ENCODE measurements at regions of chr6 and their contacts with region 1.

Region 1: GRCh38 chr6:41735427-41736356 is at the start of gene TFEB:
- DNase-seq: peak; percentile 97 to 99
- ATAC-seq: peak; percentile 92
- H3K4me3 ChIP-seq: peak within 1 kb of the TSS; percentile 54 to 87
- H3K27ac ChIP-seq: peak within 1 kb of the TSS; percentile 46 to 87
- H3K4me1 ChIP-seq: no peaks in the 10 kb centered on the region
- H3K27me3 ChIP-seq: no peaks in the 10 kb centered on the region
- total RNA-seq, gene TFEB: 22.2 to 32.1 TPM

Region 2: GRCh38 chr6:41705996-41706835 is 29.5 kb before region 1 on chr6:
- intact Hi-C with region 1: loop called in 1 of 2 experiments (anchors 1 kb)
- DNase-seq: peak; percentile 94
- ATAC-seq: peak; percentile 90
- H3K4me3 ChIP-seq: no peak overlapping the region
- H3K27ac ChIP-seq: peak overlapping the region; percentile 18 to 46
- H3K4me1 ChIP-seq: peaks cover 0 to 5% of the 10 kb centered on the region in 2 donors
- H3K27me3 ChIP-seq: no peaks in the 10 kb centered on the region

Region 3: DNA sequence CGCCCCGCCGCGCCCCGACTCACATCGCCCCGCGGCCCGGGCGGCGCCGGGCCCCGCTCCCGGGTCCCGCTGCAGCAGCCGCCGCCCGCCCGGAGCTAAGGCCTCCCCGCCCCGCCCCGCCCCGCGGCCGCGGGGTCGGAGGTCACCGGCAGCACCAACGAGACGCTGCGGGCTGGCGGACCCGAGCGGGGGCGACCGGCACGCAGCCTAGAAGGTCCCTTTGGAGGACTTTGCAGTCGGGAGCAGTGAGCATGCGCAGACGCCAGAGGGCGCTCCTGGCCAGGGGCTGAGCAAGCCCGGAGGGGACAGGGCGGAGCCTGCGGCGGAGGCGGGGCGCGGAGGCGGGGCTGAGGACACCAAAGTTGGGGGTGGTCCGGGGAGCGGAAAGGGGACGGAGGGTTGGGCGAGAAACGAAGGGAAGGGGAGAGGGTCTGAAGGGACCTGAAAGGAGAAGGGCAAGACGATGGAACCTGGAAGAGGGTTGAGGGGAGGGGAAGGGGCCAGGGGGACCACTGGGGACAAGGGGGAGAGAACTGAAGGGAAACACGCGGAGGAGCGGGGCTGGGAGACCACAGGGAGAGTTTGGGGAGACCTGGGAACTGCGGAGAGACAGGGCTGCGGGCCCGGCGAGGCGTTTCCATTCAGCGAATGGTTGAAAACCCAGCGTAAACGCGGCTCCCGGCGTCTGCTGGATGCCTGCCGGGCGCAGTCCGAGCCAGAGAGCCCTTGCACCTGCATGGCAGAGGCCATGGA is 44.3 kb after region 1 on chr6 and contains the start of gene FRS3:
- intact Hi-C with region 1: loop called in 1 of 2 experiments (anchors 2 kb)
- DNase-seq: peak; percentile 99 to 100
- ATAC-seq: peak; percentile 98
- H3K4me3 ChIP-seq: peak within 1 kb of the TSS; percentile 71 to 85
- H3K27ac ChIP-seq: peak within 1 kb of the TSS in 1 of 2 donors; percentile 62
- H3K4me1 ChIP-seq: no peaks in the 10 kb centered on the region
- H3K27me3 ChIP-seq: no peaks in the 10 kb centered on the region
- total RNA-seq, gene FRS3: 3.7 to 5.4 TPM